ENCODE measurements at regions of chr4 and their contacts with region 1.

Region 1: DNA sequence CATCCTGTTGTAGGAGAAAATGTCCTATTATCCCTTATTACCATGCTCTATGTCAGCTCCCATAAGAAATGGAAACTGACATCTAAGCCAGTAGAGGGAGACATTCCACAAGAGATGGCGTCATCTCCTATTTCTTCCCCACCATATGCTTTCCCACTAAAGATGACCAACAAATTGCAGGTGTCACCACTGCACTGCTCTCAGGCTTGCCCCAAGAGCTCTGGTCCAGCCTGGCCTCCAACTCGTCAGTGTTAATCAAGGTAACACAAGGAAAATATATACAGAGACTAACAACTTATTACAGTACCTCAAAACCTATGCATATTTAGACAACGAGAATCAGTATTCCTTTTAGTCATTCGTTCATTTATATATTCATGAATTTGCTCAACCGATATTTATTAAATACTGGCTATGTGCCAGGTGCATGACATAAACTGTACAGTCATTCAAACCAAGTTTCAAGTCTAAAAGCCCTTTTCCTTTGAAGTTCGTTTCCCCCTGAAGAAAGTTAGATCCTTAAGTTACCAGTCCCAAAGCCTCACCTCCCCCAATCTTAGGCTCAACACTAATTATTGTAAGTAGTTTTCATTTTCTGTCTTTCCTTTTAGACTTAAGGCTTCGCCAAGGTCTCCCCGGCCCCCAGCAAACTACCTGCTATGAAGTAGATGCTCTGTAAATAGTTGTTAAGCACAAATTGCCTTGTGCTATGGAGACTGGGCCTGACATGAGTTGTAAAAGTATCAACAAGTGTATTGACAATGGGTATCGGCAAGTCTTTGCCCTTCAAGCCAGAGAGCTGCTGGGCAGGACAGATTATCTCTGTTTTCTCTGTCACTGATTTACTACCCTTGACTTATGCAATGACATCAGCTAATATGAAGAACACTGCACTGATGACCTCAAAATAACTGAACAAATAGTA is 3.1 kb upstream of the FGB start:
- DNase-seq: peak; percentile 30 to 86
- ATAC-seq: peak; percentile 89 to 91
- H3K4me3 ChIP-seq: no peak overlapping the region
- H3K27ac ChIP-seq: peak overlapping the region; percentile 70 to 74
- H3K4me1 ChIP-seq: peaks cover 51% of the 10 kb centered on the region
- CTCF ChIP-seq: peak; percentile 81
- EP300 ChIP-seq: peak in 1 of 2 experiments; percentile 43; a peak in 1 of 5 replicates
- POLR2A ChIP-seq: no peak
- RAD21 ChIP-seq: peak; percentile 95 to 96

Region 2: DNA sequence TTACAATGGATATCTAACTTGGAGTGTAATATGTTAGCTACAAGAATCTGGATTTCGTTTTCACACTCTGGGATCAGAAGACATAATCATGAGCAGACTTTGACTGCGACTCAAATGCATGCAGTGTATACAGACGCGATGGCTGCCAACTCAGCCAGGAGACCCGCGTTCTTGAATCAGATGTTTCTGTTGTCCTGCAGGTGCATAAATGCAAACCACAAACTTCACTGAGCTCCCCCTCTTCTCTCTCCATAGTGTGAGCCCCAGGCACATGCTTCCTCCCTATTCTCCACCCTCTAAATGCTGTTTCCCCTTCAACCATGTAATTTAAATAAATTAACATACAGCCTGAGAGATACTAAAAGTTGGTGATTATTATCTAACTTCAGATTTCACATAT is 416.0 kb before region 1 on chr4:
- CTCF ChIA-PET with region 1: no interaction called
- POLR2A ChIA-PET with region 1: no interaction called
- DNase-seq: no peak
- ATAC-seq: no peak
- H3K4me3 ChIP-seq: no peak overlapping the region
- H3K27ac ChIP-seq: no peak overlapping the region
- H3K4me1 ChIP-seq: no peaks in the 10 kb centered on the region
- CTCF ChIP-seq: no peak
- EP300 ChIP-seq: no peak
- POLR2A ChIP-seq: no peak
- RAD21 ChIP-seq: no peak

Region 3: DNA sequence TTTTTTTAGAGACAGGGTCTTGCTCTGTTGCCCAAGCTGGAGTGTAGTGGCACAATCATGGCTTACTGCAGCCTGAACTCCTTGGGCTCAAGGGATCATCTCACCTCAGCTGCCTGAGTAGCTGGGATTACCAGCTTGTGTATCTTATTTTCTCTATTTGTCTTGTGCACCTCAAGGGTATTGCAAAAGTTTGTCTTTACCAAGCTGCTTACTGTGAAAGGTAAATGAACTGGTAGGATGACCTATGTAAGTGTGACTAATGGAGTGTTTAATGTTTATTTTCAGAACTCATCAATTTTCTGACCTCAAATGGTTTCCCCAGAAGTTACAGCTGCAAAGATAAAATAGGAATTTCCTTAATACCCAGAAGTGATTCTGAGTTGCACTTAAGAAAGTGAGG is 36.1 kb after region 1 on chr4:
- CTCF ChIA-PET with region 1: interaction called, 12 read pairs
- POLR2A ChIA-PET with region 1: interaction called, 6 read pairs
- DNase-seq: peak in 1 of 2 experiments; percentile 92
- ATAC-seq: peak; percentile 71 to 85; a peak in 5 of 6 replicates
- H3K4me3 ChIP-seq: no peak overlapping the region
- H3K27ac ChIP-seq: peak overlapping the region in 1 of 2 experiments; percentile 71; a peak in 3 of 6 replicates
- H3K4me1 ChIP-seq: peaks cover 72% of the 10 kb centered on the region
- CTCF ChIP-seq: no peak
- EP300 ChIP-seq: peak; percentile 83 to 87; a peak in 4 of 5 replicates
- POLR2A ChIP-seq: no peak
- RAD21 ChIP-seq: peak; percentile 18 to 49; a peak in 2 of 5 replicates

Region 4: GRCh38 chr4:154612472-154613414 is 53.0 kb after region 1 on chr4 and contains the start of gene FGG:
- CTCF ChIA-PET with region 1: interaction called, 214 read pairs
- POLR2A ChIA-PET with region 1: no interaction called
- DNase-seq: peak in 1 of 2 experiments; percentile 42
- ATAC-seq: peak; percentile 66 to 92; a peak in 5 of 6 replicates
- H3K4me3 ChIP-seq: peak within 1 kb of the TSS; percentile 24
- H3K27ac ChIP-seq: peak within 1 kb of the TSS; percentile 73 to 80
- H3K4me1 ChIP-seq: peaks cover 55% of the 10 kb centered on the region
- CTCF ChIP-seq: no peak
- EP300 ChIP-seq: no peak
- POLR2A ChIP-seq: no peak
- RAD21 ChIP-seq: no peak
- polyA plus RNA-seq, gene FGG: 132 and 157 TPM in 2 replicates

Measured in A549 (cell line).